Panc1 (cell line): ENCODE measurements at regions of chr10 and their contacts with region 1.

Region 1: DNA sequence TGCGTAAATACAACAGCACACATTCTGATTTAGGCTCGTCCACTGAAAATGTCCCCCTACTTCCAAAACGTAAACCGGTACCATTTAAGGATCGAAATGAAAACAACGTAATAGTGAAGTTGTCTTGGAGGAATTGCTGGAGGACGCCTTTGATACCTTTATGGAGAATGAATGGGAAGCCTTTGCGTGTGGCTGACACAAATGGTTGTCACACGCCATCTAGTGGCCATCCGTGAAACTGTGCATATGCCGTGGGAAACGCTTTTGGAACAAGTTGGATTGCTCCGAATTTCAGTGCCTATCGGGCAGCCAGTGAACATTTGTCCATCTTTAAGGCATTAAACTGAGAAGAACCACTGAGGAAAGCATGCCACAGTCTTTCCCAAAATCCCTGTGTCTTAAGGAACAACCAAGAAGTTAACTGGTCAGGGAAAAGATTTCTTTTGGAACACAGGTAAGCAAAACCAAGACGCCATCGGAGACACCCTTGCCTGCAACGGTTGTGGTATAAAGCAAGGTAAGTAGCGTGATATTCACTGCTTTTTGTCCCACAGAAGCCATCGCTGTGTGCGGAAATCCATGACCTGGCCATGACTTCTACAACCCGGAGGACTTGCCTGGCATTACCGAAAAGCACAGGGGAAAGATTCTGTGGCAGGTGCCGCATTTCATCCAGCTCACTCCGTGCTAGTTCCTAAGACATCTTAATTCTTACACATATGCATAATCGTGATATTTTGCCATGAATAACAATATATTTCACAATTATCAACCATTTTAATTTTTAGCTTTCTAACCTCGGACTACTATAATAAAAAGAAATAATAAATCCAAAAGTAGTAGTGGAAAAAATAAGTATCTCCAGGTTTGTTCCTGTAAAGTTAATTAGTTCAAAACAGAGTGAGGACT is 100.6 kb downstream of the FAM204A start:
- DNase-seq: peak; percentile 80
- ATAC-seq: peak; percentile 88
- H3K4me3 ChIP-seq: no peak overlapping the region
- H3K27ac ChIP-seq: no peak overlapping the region
- H3K4me1 ChIP-seq: peaks cover 5% of the 10 kb centered on the region
- H3K27me3 ChIP-seq: peaks cover 68% of the 10 kb centered on the region
- CTCF ChIP-seq: peak; percentile 95

Region 2: DNA sequence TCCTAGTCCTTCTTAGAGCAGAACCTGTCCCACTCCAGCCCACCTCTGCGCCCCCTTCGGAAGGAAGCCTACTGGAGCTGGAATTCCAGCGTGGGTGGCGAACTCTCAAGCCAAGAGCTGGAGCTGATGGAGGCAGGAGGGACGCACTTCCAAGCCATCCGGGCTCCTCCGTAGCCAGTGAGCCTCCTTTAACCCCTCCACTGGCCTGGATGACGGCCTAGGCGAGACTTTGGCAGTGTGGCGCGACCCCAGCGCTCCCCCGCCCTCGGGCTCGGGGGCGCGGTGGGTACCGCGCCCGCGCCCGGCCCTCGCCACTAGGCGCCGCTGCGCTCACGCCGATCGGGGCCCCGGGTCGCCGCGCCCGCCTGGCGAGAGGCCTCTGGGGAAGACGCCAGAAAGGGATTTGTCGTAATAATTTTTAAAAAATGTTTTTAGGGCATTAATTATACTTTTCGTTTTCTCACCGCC is 704.0 kb before region 1 on chr10:
- CTCF ChIA-PET with region 1: no interaction called
- POLR2A ChIA-PET with region 1: no interaction called
- in situ Hi-C with region 1: no loop called
- intact Hi-C with region 1: loop called (anchors 2 kb)
- DNase-seq: no peak
- ATAC-seq: peak; percentile 79
- H3K4me3 ChIP-seq: peak overlapping the region in 1 of 2 experiments; percentile 31; a peak in 1 of 4 replicates
- H3K27ac ChIP-seq: no peak overlapping the region
- H3K4me1 ChIP-seq: peaks cover 4% of the 10 kb centered on the region
- H3K27me3 ChIP-seq: peaks cover 46% of the 10 kb centered on the region
- CTCF ChIP-seq: peak; percentile 99

Region 3: DNA sequence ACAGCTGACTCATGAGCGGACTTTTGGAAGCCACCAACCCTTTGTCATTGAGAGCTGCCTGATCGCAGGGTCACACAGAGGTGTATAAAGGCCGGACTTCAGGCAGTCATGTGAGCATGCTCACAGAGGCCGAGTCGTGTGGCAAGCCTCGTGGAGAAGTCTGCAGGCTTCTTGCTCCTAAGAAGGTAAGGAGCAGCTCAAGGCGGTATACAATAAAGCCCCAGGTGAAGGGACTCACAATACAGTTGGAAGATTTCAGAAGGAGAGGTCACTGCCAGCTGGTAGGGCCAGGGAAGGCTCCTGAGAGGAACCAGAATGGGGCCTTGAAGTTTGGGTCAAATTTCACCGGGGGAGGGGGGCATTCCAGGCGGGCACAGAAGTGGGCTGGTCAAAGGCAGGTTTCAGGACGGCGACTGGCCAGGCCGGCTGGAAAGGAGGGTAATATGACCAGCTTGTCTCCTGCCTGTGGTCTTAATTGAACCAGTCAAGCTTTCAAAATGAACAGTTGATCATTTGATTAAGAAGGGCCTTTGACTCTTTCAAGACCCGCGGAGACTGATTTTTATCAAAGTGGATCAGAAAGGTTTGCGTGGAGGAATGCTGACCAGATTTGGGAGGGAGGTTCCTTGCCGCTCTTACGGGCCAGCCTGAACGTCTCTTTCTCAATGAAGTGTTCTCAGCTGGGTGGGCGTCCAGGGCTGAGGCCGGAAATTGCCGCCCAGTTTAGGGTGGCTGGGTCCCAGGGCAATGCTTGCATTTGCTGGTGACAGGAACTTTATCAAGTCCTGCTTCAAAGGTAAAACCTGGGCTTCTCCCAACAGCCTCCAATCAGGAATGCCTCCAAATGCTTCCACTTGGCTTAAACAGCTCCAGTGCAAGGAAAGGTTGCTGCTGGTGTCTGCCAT is 520.3 kb before region 1 on chr10:
- CTCF ChIA-PET with region 1: no interaction called
- POLR2A ChIA-PET with region 1: no interaction called
- in situ Hi-C with region 1: no loop called
- intact Hi-C with region 1: no loop called
- DNase-seq: no peak
- ATAC-seq: no peak
- H3K4me3 ChIP-seq: no peak overlapping the region
- H3K27ac ChIP-seq: no peak overlapping the region
- H3K4me1 ChIP-seq: no peaks in the 10 kb centered on the region
- H3K27me3 ChIP-seq: peaks cover 8% of the 10 kb centered on the region; the same call in 1 of the 2 replicates
- CTCF ChIP-seq: no peak

Region 4: DNA sequence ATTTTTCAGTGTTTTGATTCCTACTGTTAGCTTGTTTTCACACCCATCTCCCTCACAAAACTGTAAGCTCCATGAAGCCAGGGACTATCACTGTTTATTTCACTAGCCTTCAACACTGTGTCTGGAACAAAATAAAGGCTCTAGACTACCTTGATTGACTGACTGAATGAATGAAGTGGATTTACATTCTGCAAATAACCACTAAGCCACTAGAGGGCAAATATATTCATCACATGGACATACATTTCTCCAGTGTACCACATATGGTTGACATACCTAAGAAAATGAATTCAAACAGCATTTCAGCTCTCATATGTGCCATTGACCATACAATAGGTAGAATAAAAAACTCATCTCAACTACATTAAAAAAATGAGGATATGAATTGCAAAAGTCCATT is 380.7 kb before region 1 on chr10:
- CTCF ChIA-PET with region 1: no interaction called
- POLR2A ChIA-PET with region 1: no interaction called
- in situ Hi-C with region 1: no loop called
- intact Hi-C with region 1: loop called (anchors 5 kb)
- DNase-seq: peak; percentile 10
- ATAC-seq: peak; percentile 68; the same call in 1 of the 2 replicates
- H3K4me3 ChIP-seq: no peak overlapping the region
- H3K27ac ChIP-seq: no peak overlapping the region
- H3K4me1 ChIP-seq: no peaks in the 10 kb centered on the region
- H3K27me3 ChIP-seq: peaks cover 15% of the 10 kb centered on the region
- CTCF ChIP-seq: peak; percentile 68; the same call in 1 of the 2 replicates

Region 5: DNA sequence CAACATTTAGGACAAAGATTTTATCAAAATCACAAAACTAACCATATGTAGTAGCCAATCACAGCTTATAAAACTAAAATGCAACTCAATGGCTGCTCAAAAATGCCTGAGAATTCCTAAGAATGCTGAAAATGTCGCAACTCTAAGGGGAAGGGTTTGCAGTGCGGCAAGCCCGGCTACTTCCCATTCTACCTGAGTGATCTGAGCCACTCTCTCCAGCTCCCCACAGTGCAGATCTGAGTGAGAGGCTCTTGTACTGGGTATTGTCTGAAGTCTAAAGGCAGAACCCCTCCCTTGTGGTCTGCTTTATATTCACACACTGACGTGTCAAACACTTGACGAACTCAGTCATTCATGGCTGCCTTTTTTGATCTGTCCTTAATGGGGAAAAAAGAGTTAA is 223.6 kb before region 1 on chr10:
- CTCF ChIA-PET with region 1: no interaction called
- POLR2A ChIA-PET with region 1: no interaction called
- in situ Hi-C with region 1: no loop called
- intact Hi-C with region 1: no loop called
- DNase-seq: no peak
- ATAC-seq: no peak
- H3K4me3 ChIP-seq: no peak overlapping the region
- H3K27ac ChIP-seq: no peak overlapping the region
- H3K4me1 ChIP-seq: no peaks in the 10 kb centered on the region
- H3K27me3 ChIP-seq: no peaks in the 10 kb centered on the region
- CTCF ChIP-seq: no peak

Region 6: DNA sequence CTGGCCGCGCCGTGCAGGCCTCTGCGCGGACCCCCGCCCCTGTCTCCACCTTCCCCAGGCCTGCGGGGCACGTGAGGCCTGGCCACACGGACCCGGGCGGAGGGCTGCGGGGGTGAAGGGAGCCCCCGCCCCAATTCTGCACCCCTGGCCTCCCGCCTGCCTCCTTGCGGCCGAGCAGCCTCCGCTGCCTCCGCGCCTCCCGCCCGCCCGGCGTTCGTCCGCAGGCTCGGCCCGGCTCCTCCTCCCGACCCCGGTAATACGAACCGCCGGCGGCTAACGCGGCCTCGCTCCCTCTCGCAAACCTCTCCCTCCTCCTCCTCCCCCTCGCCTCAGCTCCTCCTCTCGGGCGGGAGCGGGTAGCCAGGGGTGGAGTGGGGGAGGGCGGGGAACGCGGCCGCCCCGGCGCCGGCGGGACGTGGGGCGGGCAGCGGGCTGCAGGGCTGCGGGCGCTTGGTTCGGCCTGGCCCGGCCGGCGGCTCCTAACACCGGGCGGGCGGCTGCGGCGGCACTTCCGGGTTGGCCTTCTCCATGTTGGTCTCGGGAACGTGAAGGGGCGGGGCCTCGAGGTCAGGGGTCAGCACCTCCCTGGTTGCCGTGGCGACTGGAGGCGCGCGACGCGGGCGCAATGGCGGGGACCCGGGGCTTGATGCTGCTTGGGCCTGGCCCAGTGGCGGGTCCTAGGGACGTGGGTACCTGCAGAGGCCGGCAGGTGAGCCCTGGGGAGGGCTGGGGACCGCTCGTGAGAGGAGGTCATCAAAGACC is 194.9 kb before region 1 on chr10 and contains the start of gene RAB11FIP2:
- CTCF ChIA-PET with region 1: no interaction called
- POLR2A ChIA-PET with region 1: no interaction called
- in situ Hi-C with region 1: no loop called
- intact Hi-C with region 1: loop called (anchors 10 kb)
- DNase-seq: peak; percentile 13
- ATAC-seq: peak; percentile 96
- H3K4me3 ChIP-seq: peak within 1 kb of the TSS; percentile 84 to 89
- H3K27ac ChIP-seq: peak within 1 kb of the TSS; percentile 94
- H3K4me1 ChIP-seq: peaks cover 24% of the 10 kb centered on the region
- H3K27me3 ChIP-seq: no peaks in the 10 kb centered on the region
- CTCF ChIP-seq: peak; percentile 40
- total RNA-seq, gene RAB11FIP2: 18.1 TPM